ENCODE measurements at regions of chr3 and their contacts with region 1.

Region 1: GRCh38 chr3:58556761-58557221 is 19.8 kb upstream of the ACOX2 start:
- DNase-seq: no peak
- H3K4me3 ChIP-seq: no peak overlapping the region
- H3K27ac ChIP-seq: no peak overlapping the region
- H3K4me1 ChIP-seq: no peaks in the 10 kb centered on the region
- H3K27me3 ChIP-seq: no peaks in the 10 kb centered on the region

Region 2: DNA sequence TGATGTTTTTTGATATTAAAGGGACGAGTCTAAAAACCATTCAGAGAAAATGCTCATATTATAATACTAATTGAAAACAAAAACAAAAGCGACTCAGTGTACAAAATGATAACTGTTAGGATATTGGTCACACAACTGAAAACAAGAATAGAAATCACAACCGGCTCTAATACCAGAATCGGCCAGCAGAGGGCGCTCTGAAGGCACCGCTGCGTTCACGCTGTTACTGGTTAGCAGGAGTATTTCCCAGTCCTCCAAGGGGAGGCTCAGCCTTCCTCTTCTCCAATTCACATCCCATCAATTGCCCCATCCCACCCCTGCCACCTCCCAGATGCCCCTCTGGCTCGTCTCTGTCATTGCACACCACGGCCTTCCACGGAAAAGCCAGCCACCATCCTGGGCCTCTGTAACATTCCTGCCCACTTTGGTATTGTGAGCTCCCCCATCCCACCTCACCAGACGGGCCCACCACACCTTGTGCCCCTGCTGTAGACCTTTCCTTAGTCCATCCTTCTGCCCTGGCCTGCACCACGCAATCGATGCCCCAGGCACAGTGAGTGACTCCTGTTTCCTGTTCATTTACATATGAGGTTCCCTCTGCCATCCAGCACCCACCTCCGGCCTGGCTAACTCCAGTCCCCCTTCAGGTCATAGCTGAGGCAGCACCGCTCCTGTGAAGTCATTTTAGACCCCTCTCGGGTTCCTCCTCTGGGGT is 11.9 kb after region 1 on chr3:
- CTCF ChIA-PET with region 1: interaction called, 38 read pairs
- POLR2A ChIA-PET with region 1: no interaction called
- DNase-seq: peak; percentile 49 to 73 (median 61)
- H3K4me3 ChIP-seq: no peak overlapping the region
- H3K27ac ChIP-seq: no peak overlapping the region
- H3K4me1 ChIP-seq: no peaks in the 10 kb centered on the region
- H3K27me3 ChIP-seq: no peaks in the 10 kb centered on the region